ENCODE measurements at regions of chr5 and their contacts with region 1.

Region 1: DNA sequence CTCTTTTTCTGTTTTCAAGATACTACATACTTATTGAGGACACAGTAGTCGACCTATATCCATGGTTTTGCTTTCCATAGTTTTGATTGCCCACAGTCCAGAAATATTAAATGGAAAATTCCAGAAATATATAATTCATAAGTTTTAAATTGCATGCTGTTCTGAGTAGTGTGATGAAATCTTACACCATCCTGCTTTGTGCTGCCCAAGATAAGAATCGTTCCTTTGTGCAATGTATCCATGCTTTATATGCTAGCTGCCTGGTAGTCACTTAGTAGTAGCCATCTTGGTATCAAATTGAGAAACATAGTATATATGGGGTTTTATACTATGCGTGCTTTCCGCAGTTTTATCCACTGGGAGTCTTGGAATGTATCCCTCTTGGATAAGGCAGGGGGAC is 59.0 kb downstream of the CWC27 start:
- DNase-seq: no peak
- H3K4me3 ChIP-seq: no peak overlapping the region
- H3K27ac ChIP-seq: no peak overlapping the region
- H3K4me1 ChIP-seq: no peaks in the 10 kb centered on the region
- CTCF ChIP-seq: no peak

Region 2: DNA sequence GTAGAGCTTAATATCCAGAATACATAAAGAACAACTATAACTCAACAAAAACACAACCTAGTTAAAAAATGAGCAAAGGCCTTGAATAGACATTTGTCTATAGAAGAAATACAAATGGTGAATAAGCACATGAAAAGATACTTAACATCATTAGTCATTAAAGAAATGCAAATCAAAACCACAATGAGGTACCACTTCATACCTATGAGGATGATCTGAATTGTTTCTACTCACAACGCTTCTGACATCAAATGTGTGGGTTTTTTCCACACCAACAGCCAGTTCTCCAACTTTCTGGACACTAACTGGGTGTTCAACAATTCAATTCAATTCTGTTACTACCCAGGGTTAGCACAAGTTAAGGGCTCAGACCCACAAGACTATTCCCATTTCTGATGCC is 81.3 kb before region 1 on chr5:
- CTCF ChIA-PET with region 1: no interaction called
- POLR2A ChIA-PET with region 1: no interaction called
- intact Hi-C with region 1: no loop called
- DNase-seq: no peak
- H3K4me3 ChIP-seq: no peak overlapping the region
- H3K27ac ChIP-seq: no peak overlapping the region
- H3K4me1 ChIP-seq: no peaks in the 10 kb centered on the region
- CTCF ChIP-seq: no peak

Region 3: DNA sequence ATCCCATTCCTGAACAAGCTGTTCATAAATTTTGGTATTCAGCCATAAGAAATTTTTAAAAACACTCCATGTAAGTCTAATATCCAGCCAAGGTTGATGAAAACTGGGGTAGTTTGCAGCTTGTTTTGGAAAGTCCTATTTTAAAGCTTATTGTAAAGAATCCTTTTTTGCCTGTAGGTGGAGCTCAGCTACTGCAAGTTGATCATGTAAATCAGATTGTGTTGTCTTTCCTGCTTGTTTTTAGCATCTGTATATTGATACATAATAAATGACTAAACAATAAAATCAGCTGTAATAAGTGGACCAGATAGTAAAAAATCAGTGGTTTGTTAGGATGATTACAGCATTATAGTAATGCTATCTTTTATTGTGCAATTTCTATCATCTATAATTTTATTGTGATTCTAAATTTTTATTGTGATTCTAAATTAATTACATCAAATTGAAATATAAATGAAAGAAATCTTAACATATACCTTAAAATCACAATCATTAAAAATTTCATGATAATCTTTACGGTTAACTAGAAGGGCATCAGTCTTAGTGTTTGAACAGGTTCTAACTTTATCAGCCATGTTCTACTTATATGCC is 16.6 kb before region 1 on chr5:
- CTCF ChIA-PET with region 1: no interaction called
- POLR2A ChIA-PET with region 1: interaction called, 15 read pairs
- intact Hi-C with region 1: no loop called
- DNase-seq: peak; percentile 65
- H3K4me3 ChIP-seq: no peak overlapping the region
- H3K27ac ChIP-seq: no peak overlapping the region
- H3K4me1 ChIP-seq: no peaks in the 10 kb centered on the region
- CTCF ChIP-seq: peak; percentile 92

Measured in OCI-LY7 (cell line).